ENCODE measurements at regions of chrX and their contacts with region 1.

Region 1: GRCh38 chrX:46400530-46401443 is 144.4 kb downstream of the ZNF674 start:
- DNase-seq: no peak
- H3K4me3 ChIP-seq: no peak overlapping the region
- H3K27ac ChIP-seq: no peak overlapping the region
- H3K4me1 ChIP-seq: no peaks in the 10 kb centered on the region
- H3K27me3 ChIP-seq: no peaks in the 10 kb centered on the region
- CTCF ChIP-seq: no peak

Region 2: GRCh38 chrX:47129157-47129898 is 728.5 kb after region 1 on chrX:
- intact Hi-C with region 1: loop called (anchors 5 kb)
- DNase-seq: peak; percentile 94 to 96
- H3K4me3 ChIP-seq: peak overlapping the region; percentile 57 to 59
- H3K27ac ChIP-seq: peak overlapping the region; percentile 82
- H3K4me1 ChIP-seq: peaks cover 0 to 6% (median 0%) of the 10 kb centered on the region in 4 donors
- H3K27me3 ChIP-seq: no peaks in the 10 kb centered on the region
- CTCF ChIP-seq: no peak